ENCODE measurements at regions of chr15 and their contacts with region 1.

Region 1: GRCh38 chr15:51051776-51052175 is 42.9 kb downstream of the TNFAIP8L3 start:
- DNase-seq: peak; percentile 5
- H3K4me3 ChIP-seq: no peak overlapping the region
- H3K27ac ChIP-seq: no peak overlapping the region
- H3K4me1 ChIP-seq: no peaks in the 10 kb centered on the region
- H3K27me3 ChIP-seq: no peaks in the 10 kb centered on the region
- CTCF ChIP-seq: no peak

Region 2: DNA sequence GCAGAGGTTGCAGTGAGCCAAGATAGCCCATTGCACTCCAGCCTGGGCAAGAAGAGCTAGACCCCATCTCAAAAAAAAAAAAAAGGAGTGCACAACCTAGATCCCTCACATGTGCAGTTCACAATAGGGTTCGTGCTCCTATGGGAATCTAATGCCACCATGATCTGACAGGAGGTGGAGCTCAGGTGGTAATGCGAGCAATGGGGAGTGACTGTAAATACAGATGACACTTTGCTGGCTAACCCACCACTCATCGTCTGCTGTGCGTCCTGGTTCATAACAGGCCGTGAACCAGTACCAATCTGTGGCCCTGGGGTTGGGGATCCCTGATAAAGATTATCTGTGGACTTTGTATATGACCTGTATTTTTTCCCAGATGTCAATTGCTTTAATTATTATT is 610.8 kb before region 1 on chr15:
- CTCF ChIA-PET with region 1: no interaction called
- POLR2A ChIA-PET with region 1: no interaction called
- intact Hi-C with region 1: no loop called
- DNase-seq: no peak
- H3K4me3 ChIP-seq: no peak overlapping the region
- H3K27ac ChIP-seq: no peak overlapping the region
- H3K4me1 ChIP-seq: no peaks in the 10 kb centered on the region
- H3K27me3 ChIP-seq: no peaks in the 10 kb centered on the region
- CTCF ChIP-seq: no peak

Region 3: DNA sequence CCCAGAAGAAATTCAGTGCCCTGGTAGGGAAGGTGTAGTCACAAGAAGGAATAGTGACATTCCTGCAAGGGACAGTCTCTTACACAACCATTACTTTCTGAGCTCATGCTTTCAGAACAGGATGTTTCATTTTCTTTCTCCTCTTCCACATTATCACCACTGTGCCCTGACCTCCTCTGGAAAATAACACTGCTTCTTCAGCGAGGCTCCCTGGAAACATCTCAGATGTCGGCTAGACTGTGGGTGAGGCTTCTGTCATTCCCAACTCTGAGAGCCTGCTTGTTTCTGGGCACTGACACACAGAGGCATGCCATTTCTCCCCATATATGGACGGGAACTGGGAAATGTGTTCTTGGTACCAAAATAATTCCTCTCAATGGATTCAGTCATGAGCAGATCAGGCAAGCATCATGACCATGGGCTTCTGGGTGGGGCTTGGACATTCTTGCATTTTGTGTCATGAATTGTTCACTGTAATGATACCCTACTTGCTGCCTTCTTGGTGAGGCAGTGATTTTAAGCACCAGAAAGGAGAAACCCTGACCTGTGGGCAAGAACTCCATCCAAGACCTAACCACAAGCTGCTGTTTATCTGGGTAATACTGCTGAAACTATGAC is 57.3 kb after region 1 on chr15:
- CTCF ChIA-PET with region 1: no interaction called
- POLR2A ChIA-PET with region 1: no interaction called
- intact Hi-C with region 1: loop called (anchors 5 kb)
- DNase-seq: no peak
- H3K4me3 ChIP-seq: no peak overlapping the region
- H3K27ac ChIP-seq: no peak overlapping the region
- H3K4me1 ChIP-seq: no peaks in the 10 kb centered on the region
- H3K27me3 ChIP-seq: peaks cover 32% of the 10 kb centered on the region
- CTCF ChIP-seq: no peak

Region 4: DNA sequence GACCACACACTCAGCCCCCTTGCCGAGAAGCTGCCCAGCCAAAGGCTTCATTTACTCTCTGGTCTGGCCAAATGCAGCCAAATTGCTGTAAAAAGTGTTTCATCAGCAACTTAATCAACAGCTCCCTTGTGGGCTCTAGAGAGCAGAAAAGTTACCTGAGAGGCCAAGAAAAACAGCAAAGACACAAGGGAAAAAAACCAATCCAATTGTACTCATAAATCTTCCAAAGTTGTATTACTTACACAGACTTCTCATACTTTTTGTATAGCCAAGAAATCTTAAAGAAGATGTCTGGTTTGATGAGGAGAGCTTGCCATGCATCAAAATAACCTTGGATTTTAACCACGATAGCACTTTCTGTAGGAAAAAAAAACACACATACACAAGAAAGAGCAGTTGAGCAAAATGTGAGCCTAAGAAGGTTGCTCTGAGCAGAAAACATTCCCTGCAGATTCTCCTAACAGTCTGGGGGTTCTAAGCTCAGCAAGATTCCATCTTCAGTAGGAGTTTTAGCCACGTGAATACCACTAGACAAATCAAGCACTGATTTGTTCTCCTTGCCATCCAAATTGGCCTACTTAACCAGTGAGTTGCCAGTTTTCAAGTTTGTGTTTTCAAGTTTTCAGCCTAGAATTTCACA is 166.6 kb after region 1 on chr15:
- CTCF ChIA-PET with region 1: no interaction called
- POLR2A ChIA-PET with region 1: no interaction called
- intact Hi-C with region 1: no loop called
- DNase-seq: no peak
- H3K4me3 ChIP-seq: no peak overlapping the region
- H3K27ac ChIP-seq: no peak overlapping the region
- H3K4me1 ChIP-seq: no peaks in the 10 kb centered on the region
- H3K27me3 ChIP-seq: no peaks in the 10 kb centered on the region
- CTCF ChIP-seq: no peak

Region 5: DNA sequence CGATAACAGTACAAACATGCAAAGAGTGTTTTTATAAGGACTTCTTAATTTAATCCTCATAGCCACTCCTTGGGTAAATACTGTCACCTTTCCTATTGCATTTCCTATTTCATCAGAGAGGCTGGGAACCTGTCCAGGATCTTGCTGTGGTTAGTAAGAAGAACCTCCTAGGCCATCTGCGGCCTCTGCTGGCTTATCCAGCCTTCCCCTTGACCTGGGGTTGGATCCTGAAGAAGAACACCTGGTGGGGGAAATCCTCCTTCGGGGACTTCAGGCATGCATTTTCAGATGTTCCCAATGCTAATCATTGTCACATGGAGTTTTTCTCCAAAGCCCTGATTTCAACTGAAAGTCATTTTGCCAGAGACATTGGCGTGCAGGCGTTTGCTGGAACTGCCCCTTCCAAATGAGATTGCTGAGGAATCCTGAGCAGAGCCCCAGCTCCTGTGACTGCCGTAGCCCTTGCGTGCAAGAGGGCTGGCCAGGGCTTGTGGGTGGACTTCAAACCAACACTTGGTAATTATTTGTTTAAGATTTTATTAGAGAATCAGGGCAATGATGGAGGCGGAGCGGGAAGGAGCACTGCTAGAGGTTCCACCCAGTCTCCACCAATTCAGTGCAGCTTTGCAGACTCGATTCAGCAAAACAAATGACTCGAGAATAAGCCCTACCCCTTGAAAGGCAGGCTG is 315.3 kb after region 1 on chr15:
- CTCF ChIA-PET with region 1: no interaction called
- POLR2A ChIA-PET with region 1: no interaction called
- intact Hi-C with region 1: loop called (anchors 10 kb)
- DNase-seq: no peak
- H3K4me3 ChIP-seq: no peak overlapping the region
- H3K27ac ChIP-seq: no peak overlapping the region
- H3K4me1 ChIP-seq: no peaks in the 10 kb centered on the region
- H3K27me3 ChIP-seq: peaks cover 4% of the 10 kb centered on the region
- CTCF ChIP-seq: no peak